ENCODE measurements at regions of chr10 and their contacts with region 1.

Region 1: DNA sequence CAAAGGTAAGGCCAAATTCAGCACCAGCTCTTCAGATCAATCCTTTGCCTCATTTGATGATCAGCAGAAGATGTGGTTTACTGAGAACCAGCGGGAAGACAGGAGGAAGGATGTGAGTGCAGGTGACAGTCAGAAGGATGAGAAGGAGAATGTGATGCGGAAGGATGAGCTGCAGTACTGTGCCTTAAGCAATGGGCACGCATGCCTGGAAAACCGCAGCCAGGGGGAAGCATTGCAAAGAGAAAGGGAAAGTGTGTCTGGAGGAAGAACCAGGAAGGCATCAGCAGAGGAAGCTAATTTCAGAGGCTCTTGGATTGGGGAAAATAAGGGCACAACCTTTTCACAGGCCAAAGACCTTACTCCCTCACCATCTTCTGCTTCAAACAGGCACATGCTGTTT is 25.7 kb downstream of the C10orf71 start:
- DNase-seq: peak; percentile 54
- ATAC-seq: peak; percentile 52; the same call in 1 of the 2 replicates
- H3K4me3 Mint-ChIP-seq: no peak overlapping the region
- H3K27ac Mint-ChIP-seq: no peak overlapping the region
- H3K4me1 Mint-ChIP-seq: peaks cover 5% of the 10 kb centered on the region
- H3K27me3 Mint-ChIP-seq: no peaks in the 10 kb centered on the region
- CTCF ChIP-seq: no peak

Region 2: DNA sequence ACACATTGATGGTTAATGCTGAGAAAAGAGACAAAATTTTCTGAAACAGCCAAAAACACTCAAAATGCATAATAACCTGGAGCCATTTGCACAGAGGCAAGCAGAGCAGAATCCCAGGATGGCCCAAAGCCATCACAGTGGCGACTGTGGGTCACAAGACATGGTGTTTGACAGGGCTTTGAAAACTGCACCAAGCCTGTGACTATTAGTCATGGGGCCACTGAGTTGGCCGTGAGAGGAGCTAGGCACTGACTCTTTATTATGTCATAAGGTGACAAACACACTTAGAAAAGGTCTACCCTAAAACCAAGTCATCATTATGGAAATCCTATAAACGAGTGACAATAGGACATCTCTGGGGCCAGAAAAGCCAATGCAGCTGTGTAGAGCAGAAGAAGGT is 47.3 kb after region 1 on chr10:
- CTCF ChIA-PET with region 1: no interaction called
- POLR2A ChIA-PET with region 1: no interaction called
- DNase-seq: no peak
- ATAC-seq: no peak
- H3K4me3 Mint-ChIP-seq: no peak overlapping the region
- H3K27ac Mint-ChIP-seq: no peak overlapping the region
- H3K4me1 Mint-ChIP-seq: peaks cover 8% of the 10 kb centered on the region
- H3K27me3 Mint-ChIP-seq: no peaks in the 10 kb centered on the region
- CTCF ChIP-seq: no peak

Region 3: DNA sequence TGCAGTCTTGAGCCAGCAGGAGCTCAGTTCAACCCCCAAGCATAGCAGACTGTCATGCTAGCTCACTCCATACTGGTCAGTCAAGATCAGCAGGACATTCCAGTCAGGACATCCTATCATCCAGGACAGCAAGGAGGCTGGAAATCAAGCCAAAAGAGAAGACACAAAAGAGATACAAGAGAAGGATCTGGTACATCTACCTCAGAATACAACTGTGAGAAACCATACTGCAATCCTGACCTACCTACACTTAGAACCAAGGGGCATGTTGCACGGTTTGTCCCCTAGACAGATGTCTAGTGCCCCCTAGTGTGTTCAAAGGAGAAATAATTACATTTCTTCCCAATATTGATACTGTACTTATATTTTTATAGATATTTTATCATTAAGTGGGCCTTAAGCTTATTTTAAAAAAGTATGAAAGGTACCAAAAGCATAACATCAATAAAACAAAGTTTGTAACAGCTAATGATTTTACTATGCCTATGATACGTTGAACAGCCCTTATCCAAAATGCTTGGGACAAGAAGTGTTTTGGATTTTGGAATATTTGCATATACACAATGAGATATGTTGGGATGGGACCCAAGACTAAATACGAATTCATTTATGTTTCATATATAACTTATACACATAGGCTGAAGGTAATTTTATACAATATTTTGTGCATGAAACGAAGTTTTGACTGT is 187.6 kb after region 1 on chr10:
- CTCF ChIA-PET with region 1: interaction called, 11 read pairs
- POLR2A ChIA-PET with region 1: no interaction called
- DNase-seq: no peak
- ATAC-seq: peak; percentile 73
- H3K4me3 Mint-ChIP-seq: no peak overlapping the region
- H3K27ac Mint-ChIP-seq: no peak overlapping the region
- H3K4me1 Mint-ChIP-seq: no peaks in the 10 kb centered on the region
- H3K27me3 Mint-ChIP-seq: no peaks in the 10 kb centered on the region
- CTCF ChIP-seq: peak; percentile 40; the same call in 1 of the 2 replicates